BJ (cell line): ENCODE measurements at regions of chr3 and their contacts with region 1.

Region 1: DNA sequence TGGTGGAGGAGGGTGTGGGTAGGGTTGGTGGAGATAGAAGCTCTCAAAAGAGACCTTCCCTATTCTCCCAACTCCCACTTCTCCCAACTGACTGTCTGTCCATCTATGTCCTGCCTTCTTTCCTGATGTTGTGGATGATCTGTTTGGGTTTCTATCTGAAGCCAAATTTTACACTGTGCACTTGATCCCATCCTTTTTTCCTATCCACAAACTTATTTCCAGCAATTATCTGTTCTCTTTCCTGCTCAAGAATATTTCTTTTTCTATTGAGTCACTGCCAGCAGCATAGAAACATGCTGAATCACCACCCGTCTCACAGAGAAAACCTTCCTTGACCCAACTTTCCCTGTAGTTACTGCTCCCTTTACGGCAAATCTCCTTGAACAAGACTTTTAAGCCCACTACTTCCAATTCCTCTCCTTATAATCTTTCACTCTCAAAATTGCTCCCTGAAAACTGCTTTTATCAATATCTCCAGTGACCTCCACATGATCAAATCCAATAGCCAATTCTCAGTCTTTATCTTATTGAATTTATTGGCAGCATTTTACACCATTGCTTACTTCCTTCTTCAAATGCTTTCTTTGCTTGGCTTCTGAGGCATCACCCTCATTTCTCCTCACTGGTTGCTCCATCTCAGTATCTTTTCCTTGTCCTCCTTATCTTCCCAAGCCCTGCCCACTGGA is 141.2 kb upstream of the SLC7A14 start:
- DNase-seq: no peak
- H3K4me3 ChIP-seq: no peak overlapping the region
- H3K27me3 ChIP-seq: no peaks in the 10 kb centered on the region
- CTCF ChIP-seq: no peak

Region 2: DNA sequence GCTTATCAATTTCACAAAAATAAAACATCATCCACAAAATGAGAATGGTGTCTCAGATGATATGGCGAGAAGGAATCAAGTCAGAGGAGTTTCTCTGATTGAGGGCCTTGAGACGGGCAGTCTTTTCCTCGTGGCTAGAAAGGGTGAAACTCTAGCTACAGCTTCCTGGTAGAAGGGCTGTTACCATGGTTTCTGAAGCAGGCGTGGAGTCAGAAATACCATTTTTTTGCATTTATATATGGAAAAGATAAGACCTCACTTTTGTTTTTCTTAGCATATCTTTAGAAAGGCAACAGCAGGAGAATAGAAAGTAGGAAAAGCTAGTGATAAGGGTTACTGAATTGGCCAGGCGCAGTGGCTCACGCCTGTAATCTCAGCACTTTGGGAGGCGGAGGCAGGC is 833.0 kb before region 1 on chr3:
- CTCF ChIA-PET with region 1: no interaction called
- POLR2A ChIA-PET with region 1: no interaction called
- DNase-seq: no peak
- H3K4me3 ChIP-seq: no peak overlapping the region
- H3K27me3 ChIP-seq: no peaks in the 10 kb centered on the region
- CTCF ChIP-seq: no peak

Region 3: GRCh38 chr3:170714122-170714521 is 13.0 kb before region 1 on chr3:
- CTCF ChIA-PET with region 1: interaction called, 13 read pairs
- POLR2A ChIA-PET with region 1: no interaction called
- DNase-seq: no peak
- H3K4me3 ChIP-seq: no peak overlapping the region
- H3K27me3 ChIP-seq: no peaks in the 10 kb centered on the region
- CTCF ChIP-seq: no peak